ENCODE measurements at regions of chr1 and their contacts with region 1.

Region 1: DNA sequence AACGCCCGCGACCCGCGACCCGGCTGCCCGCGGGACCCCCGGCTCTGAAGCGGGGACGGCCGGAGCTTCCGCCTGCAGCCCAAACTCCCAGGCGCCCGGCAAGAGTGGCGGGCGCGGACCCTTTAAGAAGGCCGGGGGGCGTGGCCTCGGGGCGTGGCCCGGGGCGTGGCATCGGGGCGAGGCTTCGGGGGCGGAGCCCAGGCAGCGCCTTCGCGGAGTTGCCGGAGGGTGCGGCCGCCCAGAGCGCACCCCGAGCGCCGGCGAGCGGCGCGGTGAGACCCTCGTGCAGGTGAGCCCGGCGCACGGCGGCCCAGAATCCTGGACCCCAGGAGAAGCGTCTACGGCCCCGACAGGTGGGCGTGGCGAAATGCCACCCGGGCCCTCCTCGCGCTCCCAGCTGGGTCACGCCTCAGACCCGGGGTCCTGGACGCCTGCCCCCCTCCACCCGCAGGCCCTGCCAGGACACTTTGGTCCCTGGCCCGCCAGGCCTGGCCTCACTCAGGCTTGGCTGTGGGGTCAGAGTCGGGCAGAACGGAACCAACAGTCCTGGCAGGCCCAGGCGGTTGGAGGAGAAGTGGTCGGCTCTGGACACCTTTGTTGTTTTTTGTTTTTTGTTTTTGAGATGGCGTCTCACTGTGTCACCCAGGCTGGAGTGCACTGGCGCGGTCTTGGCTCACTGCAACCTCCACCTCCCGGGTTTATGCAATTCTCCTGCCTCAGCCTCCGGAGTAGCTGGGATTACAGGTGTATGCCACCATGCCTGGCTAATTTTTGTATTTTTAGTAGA is 14.4 kb downstream of the RNF223 start:
- DNase-seq: peak; percentile 95
- ATAC-seq: peak; percentile 51
- H3K4me3 Mint-ChIP-seq: peak overlapping the region; percentile 82
- H3K27ac Mint-ChIP-seq: no peak overlapping the region
- H3K4me1 Mint-ChIP-seq: peaks cover 29% of the 10 kb centered on the region
- H3K27me3 Mint-ChIP-seq: peaks cover 20% of the 10 kb centered on the region

Region 2: GRCh38 chr1:904310-904950 is 155.3 kb before region 1 on chr1:
- CTCF ChIA-PET with region 1: no interaction called
- POLR2A ChIA-PET with region 1: no interaction called
- intact Hi-C with region 1: loop called in 1 of 2 experiments (anchors 1 kb)
- DNase-seq: peak; percentile 91
- ATAC-seq: peak; percentile 90
- H3K4me3 Mint-ChIP-seq: peak overlapping the region; percentile 64
- H3K27ac Mint-ChIP-seq: no peak overlapping the region
- H3K4me1 Mint-ChIP-seq: peaks cover 7% of the 10 kb centered on the region
- H3K27me3 Mint-ChIP-seq: peaks cover 24% of the 10 kb centered on the region

Region 3: DNA sequence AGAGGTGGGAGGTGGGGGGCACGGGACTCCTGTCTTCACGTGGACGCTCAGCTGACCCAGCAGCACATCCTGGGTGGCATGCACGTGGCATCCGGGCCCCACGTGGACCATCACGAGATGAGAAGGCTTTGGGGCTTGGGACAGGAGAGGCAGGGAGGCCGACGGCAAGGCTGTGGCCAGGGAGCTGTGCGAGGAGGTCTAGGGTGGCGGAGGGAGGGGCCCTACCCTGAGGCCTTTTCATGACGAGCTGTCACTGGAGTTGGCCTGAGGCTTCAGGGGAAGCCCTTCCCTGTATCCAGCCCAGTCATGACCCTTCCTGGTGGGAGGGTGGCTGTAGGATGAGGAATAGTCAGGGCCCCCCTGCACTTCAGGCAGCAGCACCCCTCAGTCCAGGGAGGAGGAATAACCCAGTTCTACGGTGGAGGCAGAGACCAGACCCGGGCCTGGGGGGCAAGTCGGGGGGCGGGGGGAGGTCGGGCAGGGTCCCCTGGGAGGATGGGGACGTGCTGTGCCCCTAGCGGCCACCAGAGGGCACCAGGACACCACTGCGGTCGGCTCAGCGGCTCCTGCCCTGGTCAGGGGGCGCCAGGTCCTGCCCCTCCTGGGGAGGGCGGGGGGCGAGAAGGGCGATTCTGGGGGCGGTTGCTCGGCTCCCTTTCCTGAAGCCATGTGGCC is 75.8 kb before region 1 on chr1:
- CTCF ChIA-PET with region 1: interaction called, 19 read pairs
- POLR2A ChIA-PET with region 1: no interaction called
- intact Hi-C with region 1: loop called (anchors 1 to 2 kb)
- DNase-seq: peak; percentile 80
- ATAC-seq: peak; percentile 82
- H3K4me3 Mint-ChIP-seq: no peak overlapping the region
- H3K27ac Mint-ChIP-seq: no peak overlapping the region
- H3K4me1 Mint-ChIP-seq: no peaks in the 10 kb centered on the region
- H3K27me3 Mint-ChIP-seq: peaks cover 18% of the 10 kb centered on the region

Region 4: GRCh38 chr1:1019122-1019999 is 40.3 kb before region 1 on chr1:
- CTCF ChIA-PET with region 1: interaction called, 4 read pairs
- POLR2A ChIA-PET with region 1: no interaction called
- intact Hi-C with region 1: loop called (anchors 1 kb)
- DNase-seq: peak; percentile 90
- ATAC-seq: peak; percentile 75
- H3K4me3 Mint-ChIP-seq: peak overlapping the region; percentile 59
- H3K27ac Mint-ChIP-seq: no peak overlapping the region
- H3K4me1 Mint-ChIP-seq: peaks cover 15% of the 10 kb centered on the region
- H3K27me3 Mint-ChIP-seq: peaks cover 9% of the 10 kb centered on the region

Region 5: GRCh38 chr1:1040004-1040991 is 19.4 kb before region 1 on chr1:
- CTCF ChIA-PET with region 1: interaction called, 7 read pairs
- POLR2A ChIA-PET with region 1: no interaction called
- intact Hi-C with region 1: loop called (anchors 1 to 2 kb)
- DNase-seq: peak; percentile 93
- ATAC-seq: peak; percentile 87
- H3K4me3 Mint-ChIP-seq: peak overlapping the region; percentile 35
- H3K27ac Mint-ChIP-seq: no peak overlapping the region
- H3K4me1 Mint-ChIP-seq: peaks cover 15% of the 10 kb centered on the region
- H3K27me3 Mint-ChIP-seq: peaks cover 22% of the 10 kb centered on the region

Region 6: DNA sequence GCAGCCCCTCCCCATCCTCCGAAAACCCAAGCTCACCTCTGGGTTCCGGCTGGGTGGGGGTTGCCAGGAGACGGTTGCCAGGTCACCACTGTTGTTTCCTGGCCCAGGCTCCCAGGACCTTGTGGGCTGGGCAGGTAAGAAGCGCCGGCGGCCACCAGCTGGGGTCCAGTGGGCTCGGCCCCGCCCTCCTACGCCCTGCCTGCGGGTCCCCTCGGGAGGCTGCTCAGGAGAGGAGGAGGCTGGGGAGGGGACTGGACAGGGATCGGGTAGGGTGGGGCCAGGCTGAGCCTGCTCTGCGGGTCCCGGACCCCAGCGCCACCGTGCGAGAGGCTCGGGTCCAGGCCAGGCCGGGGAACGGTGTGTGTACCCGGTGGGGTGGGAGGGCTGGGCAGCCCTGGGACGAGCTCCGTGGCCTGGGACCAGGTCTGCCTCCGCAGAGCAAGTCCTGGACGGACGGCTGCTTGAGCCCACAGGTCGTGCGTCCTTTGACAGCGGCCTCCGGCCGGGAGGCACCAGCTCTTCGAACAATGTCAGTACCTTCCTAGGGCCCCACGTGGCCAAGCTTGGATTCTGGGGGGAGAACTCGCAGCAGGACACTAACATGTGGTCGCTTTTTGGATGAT is 114.2 kb after region 1 on chr1 and contains the start of gene TTLL10:
- CTCF ChIA-PET with region 1: no interaction called
- POLR2A ChIA-PET with region 1: no interaction called
- intact Hi-C with region 1: no loop called
- DNase-seq: peak; percentile 65
- ATAC-seq: peak; percentile 60
- H3K4me3 Mint-ChIP-seq: no peak within 1 kb of the TSS
- H3K27ac Mint-ChIP-seq: no peak within 1 kb of the TSS
- H3K4me1 Mint-ChIP-seq: peaks cover 22% of the 10 kb centered on the region
- H3K27me3 Mint-ChIP-seq: peaks cover 8% of the 10 kb centered on the region
- total RNA-seq, gene TTLL10: not detected

Region 7: DNA sequence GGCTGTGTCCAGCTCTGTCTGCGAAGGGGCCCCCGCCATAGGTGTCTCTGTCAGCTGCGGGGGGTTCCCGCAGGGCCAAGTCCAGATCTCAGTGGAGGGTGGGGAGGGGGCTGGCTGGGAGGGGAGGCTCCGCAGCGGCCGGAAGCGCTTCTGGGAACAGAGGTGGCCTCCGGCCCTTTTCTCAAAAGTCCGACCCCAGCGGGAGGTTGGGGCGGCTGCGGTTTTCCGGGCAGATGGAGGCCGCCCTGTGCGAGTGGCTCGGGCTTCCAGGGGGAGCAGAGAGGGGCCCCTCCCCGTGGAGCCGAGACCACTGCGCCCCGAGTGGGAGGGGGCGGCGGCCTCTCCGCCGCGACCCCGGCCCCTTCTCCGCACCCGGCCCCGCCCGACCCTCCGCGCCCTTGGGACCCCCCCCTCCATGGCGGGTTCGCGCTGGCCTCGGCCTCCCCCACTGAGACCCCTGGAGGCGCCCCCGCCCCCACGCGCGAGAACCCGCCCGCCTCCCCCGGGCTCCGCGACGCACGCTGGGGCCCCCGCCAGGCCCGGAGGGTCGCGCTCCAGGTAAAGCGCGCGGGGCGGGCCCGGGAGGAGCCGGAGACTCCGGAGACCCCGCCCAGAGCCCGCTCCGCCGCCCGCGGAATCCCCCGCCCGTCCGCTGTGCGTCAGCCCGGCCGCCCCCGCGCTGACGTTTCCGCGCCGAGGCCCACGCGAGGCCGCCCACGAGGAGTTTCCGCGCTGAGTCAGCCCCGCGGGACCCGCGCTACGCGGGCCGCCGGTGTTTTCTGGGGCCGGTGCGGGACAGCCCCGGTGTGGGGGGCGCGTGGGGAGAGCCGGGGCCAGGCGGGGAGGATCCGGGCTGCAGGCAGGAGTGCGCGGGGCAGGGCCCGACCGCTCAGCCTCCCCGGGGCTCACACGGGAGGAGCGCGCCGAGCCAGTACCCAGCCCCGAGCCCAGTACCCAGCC is 141.4 kb after region 1 on chr1:
- CTCF ChIA-PET with region 1: no interaction called
- POLR2A ChIA-PET with region 1: no interaction called
- intact Hi-C with region 1: loop called in 1 of 2 experiments (anchors 1 kb)
- DNase-seq: peak; percentile 94
- ATAC-seq: peak; percentile 78
- H3K4me3 Mint-ChIP-seq: peak overlapping the region; percentile 69
- H3K27ac Mint-ChIP-seq: peak overlapping the region; percentile 85
- H3K4me1 Mint-ChIP-seq: peaks cover 12% of the 10 kb centered on the region
- H3K27me3 Mint-ChIP-seq: no peaks in the 10 kb centered on the region

Region 8: GRCh38 chr1:1349256-1350012 is 289.7 kb after region 1 on chr1 and contains the start of gene DVL1:
- CTCF ChIA-PET with region 1: no interaction called
- POLR2A ChIA-PET with region 1: no interaction called
- intact Hi-C with region 1: loop called in 1 of 2 experiments (anchors 1 kb)
- DNase-seq: peak; percentile 81
- ATAC-seq: peak; percentile 71
- H3K4me3 Mint-ChIP-seq: peak within 1 kb of the TSS; percentile 74
- H3K27ac Mint-ChIP-seq: no peak within 1 kb of the TSS
- H3K4me1 Mint-ChIP-seq: peaks cover 25% of the 10 kb centered on the region
- H3K27me3 Mint-ChIP-seq: peaks cover 11% of the 10 kb centered on the region
- total RNA-seq, gene DVL1: 35.3 to 35.5 TPM

Measured in activated CD4-positive, alpha-beta T cell treated with anti-CD3 and anti-CD28 coated beads for 36 hours (primary cell).